Caco-2 (cell line): ENCODE measurements at regions of chr6 and their contacts with region 1.

Region 1: DNA sequence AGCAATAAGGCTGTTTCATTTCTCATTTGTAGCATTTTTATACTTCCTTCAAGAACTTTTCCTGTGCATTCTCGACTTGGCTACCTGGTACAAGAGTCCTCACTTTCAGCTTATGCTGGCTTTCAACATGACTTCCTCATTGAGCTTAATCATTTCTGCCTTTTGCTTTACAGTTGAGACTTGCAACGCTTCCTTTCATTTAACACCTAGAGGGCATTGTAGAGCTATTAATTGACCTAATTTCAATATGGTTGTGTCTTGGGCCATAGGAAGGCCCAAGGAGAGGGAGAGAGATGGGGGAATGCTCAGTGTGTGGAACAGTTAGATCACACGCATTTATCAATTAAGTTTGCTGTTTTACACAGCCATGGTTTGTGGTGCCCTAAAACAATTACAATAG is 37.2 kb downstream of the SLC22A2 start:
- DNase-seq: peak in 1 of 2 experiments; percentile 15
- H3K4me3 ChIP-seq: no peak overlapping the region
- H3K4me3 Mint-ChIP-seq: no peak overlapping the region
- H3K27ac Mint-ChIP-seq: no peak overlapping the region
- H3K4me1 ChIP-seq: no peaks in the 10 kb centered on the region
- H3K4me1 Mint-ChIP-seq: peaks cover 11% of the 10 kb centered on the region
- H3K27me3 ChIP-seq: no peaks in the 10 kb centered on the region
- H3K27me3 Mint-ChIP-seq: no peaks in the 10 kb centered on the region
- CTCF ChIP-seq: peak in 1 of 2 experiments; percentile 12

Region 2: DNA sequence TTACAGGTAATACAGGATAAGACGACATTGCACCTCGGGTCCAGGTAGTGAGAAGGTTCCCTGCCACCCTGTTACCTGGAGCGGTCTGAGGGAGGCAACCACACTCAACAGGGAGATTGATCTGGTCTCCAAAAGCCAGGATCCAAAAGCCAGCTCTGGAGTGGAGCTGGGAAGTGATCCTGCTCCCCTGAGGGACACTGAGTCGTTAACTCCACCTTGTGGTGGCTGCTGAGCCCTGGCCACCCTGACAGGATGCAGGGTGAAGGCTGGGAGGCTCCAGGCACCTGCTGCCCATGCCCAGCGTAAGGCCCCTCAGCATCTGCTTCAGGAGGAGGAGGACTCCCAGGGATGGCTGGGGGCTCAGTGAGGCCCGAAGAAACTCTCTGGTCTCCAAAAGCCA is 75.9 kb after region 1 on chr6:
- CTCF ChIA-PET with region 1: interaction called, 8 read pairs
- POLR2A ChIA-PET with region 1: no interaction called
- intact Hi-C with region 1: loop called (anchors 1 kb)
- DNase-seq: peak in 1 of 2 experiments; percentile 47
- H3K4me3 ChIP-seq: no peak overlapping the region
- H3K4me3 Mint-ChIP-seq: no peak overlapping the region
- H3K27ac Mint-ChIP-seq: no peak overlapping the region
- H3K4me1 ChIP-seq: no peaks in the 10 kb centered on the region
- H3K4me1 Mint-ChIP-seq: peaks cover 1% of the 10 kb centered on the region
- H3K27me3 ChIP-seq: no peaks in the 10 kb centered on the region
- H3K27me3 Mint-ChIP-seq: no peaks in the 10 kb centered on the region
- CTCF ChIP-seq: peak in 1 of 2 experiments; percentile 70